H1 (cell line): ENCODE measurements at regions of chr17 and their contacts with region 1.

Region 1: GRCh38 chr17:9729034-9729650 is 62.2 kb downstream of the DHRS7C start:
- DNase-seq: no peak
- H3K4me3 ChIP-seq: no peak overlapping the region
- H3K27ac ChIP-seq: no peak overlapping the region
- H3K4me1 ChIP-seq: no peaks in the 10 kb centered on the region
- H3K27me3 ChIP-seq: no peaks in the 10 kb centered on the region
- CTCF ChIP-seq: peak in 2 of 3 experiments; percentile 89 to 92; a peak in 3 of 4 replicates
- EP300 ChIP-seq: no peak
- POLR2A ChIP-seq: no peak
- RAD21 ChIP-seq: peak; percentile 91 to 93

Region 2: DNA sequence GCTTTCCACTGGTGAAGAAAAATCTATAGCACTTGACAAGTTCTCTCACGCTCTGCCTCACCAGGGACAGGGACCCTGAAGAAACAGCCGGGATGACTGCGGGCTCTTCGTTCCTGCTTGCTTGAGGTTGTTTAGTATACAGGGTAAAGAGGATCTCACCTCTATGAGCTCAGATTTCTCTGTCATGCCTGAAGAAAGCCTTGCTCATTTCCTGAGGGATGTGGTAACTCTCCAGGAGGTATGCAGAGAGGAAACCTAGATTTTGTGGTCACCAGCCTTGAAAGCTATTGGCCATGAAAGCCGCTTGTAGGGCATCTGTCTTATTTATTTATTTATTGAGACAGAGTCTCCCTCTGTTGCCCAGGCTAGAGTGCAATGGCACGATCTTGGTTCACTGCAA is 60.6 kb before region 1 on chr17:
- CTCF ChIA-PET with region 1: no interaction called
- POLR2A ChIA-PET with region 1: no interaction called
- DNase-seq: no peak
- H3K4me3 ChIP-seq: no peak overlapping the region
- H3K27ac ChIP-seq: no peak overlapping the region
- H3K4me1 ChIP-seq: peaks cover 0 to 5% (median under 1%) of the 10 kb centered on the region in 4 experiments; a peak in 3 of 7 replicates
- H3K27me3 ChIP-seq: no peaks in the 10 kb centered on the region
- CTCF ChIP-seq: no peak
- EP300 ChIP-seq: no peak
- POLR2A ChIP-seq: no peak
- RAD21 ChIP-seq: no peak

Region 3: DNA sequence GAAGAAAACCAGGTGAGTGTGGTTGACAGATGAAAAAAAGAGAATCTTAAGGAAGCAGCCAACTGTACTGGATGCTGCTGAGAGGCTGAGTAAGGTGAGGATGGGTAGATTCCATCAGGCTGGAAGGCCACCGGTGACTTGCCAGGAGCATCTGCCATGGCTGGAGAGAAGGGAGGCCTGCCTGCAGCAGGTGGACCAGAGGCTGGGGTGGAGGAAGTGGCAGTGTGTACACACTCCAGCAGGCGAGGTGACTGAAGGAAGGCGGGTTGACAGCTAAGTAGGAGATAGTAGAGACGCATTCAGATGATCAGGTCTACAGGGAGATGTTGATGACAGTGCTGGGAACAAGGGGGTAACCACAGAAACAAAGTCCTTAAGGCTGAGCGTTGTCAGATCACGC is 14.3 kb before region 1 on chr17:
- CTCF ChIA-PET with region 1: interaction called, 15 read pairs
- POLR2A ChIA-PET with region 1: no interaction called
- DNase-seq: no peak
- H3K4me3 ChIP-seq: no peak overlapping the region
- H3K27ac ChIP-seq: no peak overlapping the region
- H3K4me1 ChIP-seq: no peaks in the 10 kb centered on the region
- H3K27me3 ChIP-seq: no peaks in the 10 kb centered on the region
- CTCF ChIP-seq: no peak
- EP300 ChIP-seq: no peak
- POLR2A ChIP-seq: no peak
- RAD21 ChIP-seq: no peak

Region 4: GRCh38 chr17:9743096-9743495 is 14.0 kb after region 1 on chr17:
- CTCF ChIA-PET with region 1: interaction called, 20 read pairs
- POLR2A ChIA-PET with region 1: no interaction called
- DNase-seq: no peak
- H3K4me3 ChIP-seq: no peak overlapping the region
- H3K27ac ChIP-seq: no peak overlapping the region
- H3K4me1 ChIP-seq: no peaks in the 10 kb centered on the region
- H3K27me3 ChIP-seq: no peaks in the 10 kb centered on the region
- CTCF ChIP-seq: no peak
- EP300 ChIP-seq: no peak
- POLR2A ChIP-seq: no peak
- RAD21 ChIP-seq: no peak

Region 5: GRCh38 chr17:9768381-9768934 is 39.3 kb after region 1 on chr17:
- CTCF ChIA-PET with region 1: interaction called, 20 read pairs
- POLR2A ChIA-PET with region 1: no interaction called
- DNase-seq: no peak
- H3K4me3 ChIP-seq: no peak overlapping the region
- H3K27ac ChIP-seq: no peak overlapping the region
- H3K4me1 ChIP-seq: no peaks in the 10 kb centered on the region; a peak in 1 of 7 replicates
- H3K27me3 ChIP-seq: no peaks in the 10 kb centered on the region
- CTCF ChIP-seq: peak in 1 of 3 experiments; percentile 38; a peak in 1 of 4 replicates
- EP300 ChIP-seq: no peak
- POLR2A ChIP-seq: no peak
- RAD21 ChIP-seq: peak; percentile 48 to 50